Sciatic nerve (tissue), 2 donors: ENCODE measurements at regions of chr7 and their contacts with region 1.

Region 1: GRCh38 chr7:73921623-73922528 is 60.9 kb downstream of the TMEM270 start:
- DNase-seq: no peak
- ATAC-seq: peak; percentile 76

Region 2: GRCh38 chr7:73842247-73842895 is 79.5 kb before region 1 on chr7 and contains the start of gene METTL27:
- intact Hi-C with region 1: no loop called
- DNase-seq: peak; percentile 95
- ATAC-seq: peak; percentile 98
- total RNA-seq, gene METTL27: 6.2 TPM

Region 3: DNA sequence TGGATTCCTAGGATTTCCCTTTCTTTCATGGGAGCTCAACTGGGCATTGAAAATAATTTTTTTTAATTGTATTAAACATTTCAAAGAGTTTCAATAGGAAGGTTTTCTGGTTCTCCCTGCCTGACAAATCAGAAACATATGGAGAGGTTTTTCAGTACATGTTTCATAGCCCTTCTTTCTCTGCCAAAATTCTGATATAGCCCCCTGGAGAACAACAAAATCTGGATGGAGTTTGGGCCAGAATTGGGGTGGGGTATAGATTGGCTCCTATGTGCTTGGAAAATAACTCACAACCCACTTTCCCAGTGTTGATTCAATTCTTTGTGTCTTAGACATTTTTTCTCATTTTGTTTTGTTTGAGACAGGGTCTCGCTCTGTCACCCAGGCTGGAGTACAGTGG is 227.7 kb after region 1 on chr7:
- intact Hi-C with region 1: loop called (anchors 10 kb)
- DNase-seq: no peak
- ATAC-seq: no peak

Region 4: DNA sequence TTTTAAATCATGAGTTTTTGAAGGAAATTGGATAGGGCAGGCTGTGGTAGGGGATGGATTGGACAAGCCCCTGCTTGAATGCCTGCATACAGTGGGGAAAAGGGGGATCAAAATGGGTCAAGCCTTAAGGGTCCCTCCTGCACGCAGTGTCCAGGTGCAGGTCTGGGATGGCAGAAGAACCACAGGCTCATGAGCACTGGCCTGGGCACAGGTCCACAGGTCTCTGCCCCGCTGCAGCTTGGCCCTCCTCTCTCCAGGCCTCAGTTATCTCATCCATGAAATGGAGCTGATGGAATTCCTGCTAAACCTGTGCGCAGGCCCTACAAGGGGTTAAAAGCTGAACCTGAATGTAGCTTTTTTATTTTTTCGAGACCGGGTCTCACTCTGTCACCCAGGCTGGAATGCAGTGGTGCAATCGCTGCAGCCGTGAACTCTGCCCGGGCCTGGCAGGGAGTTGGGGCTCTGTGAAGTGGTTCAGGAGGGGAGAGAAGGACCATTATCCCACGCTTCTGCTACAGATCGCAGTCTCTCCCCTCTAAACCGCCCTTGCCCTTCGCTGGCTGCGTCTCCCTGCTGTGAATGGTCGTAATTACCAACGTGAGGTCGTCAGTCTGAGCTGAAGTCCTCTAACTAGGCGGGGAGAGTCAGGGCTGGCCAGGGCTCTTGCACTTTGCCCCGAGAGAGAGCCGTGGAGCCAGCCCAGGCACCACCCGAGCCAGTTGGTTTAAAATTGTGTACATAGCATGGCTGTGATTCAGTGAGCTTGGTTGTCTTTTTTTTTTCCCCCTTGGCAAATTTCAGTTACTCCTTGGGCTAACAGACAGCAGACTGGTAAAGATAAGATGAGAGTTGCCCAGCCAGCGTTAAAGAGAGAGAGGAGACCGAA is 658.2 kb after region 1 on chr7:
- intact Hi-C with region 1: no loop called
- DNase-seq: no peak
- ATAC-seq: peak; percentile 77